Calu3 (cell line): ENCODE measurements at regions of chr12 and their contacts with region 1.

Region 1: GRCh38 chr12:75977952-75978671 is 53.5 kb downstream of the PHLDA1 start:
- DNase-seq: peak; percentile 92
- H3K4me3 Mint-ChIP-seq: peak overlapping the region; percentile 51
- H3K27ac Mint-ChIP-seq: peak overlapping the region; percentile 97
- H3K4me1 Mint-ChIP-seq: peaks cover 65% of the 10 kb centered on the region
- H3K27me3 Mint-ChIP-seq: no peaks in the 10 kb centered on the region
- CTCF ChIP-seq: no peak

Region 2: DNA sequence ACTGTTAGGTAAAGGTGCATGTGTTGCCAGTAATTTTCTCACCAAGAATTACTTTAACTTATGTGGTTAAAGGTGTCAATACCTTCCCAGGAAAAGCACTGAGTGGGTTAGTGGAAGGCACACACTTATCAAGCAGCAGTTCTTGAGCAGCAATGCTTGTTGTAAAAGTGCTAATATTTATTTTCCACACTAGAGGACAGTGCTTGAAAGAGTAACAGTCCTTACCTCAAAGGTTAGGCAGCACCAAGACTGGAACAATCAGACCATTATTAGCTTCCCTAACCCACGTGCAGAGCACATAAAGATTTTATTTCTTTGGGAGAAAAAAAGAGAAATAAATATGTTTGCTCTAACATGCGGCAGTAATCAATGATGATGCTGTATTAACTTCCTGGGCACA is 417.9 kb before region 1 on chr12:
- CTCF ChIA-PET with region 1: no interaction called
- intact Hi-C with region 1: loop called (anchors 5 kb)
- DNase-seq: no peak
- H3K4me3 Mint-ChIP-seq: no peak overlapping the region
- H3K27ac Mint-ChIP-seq: no peak overlapping the region
- H3K4me1 Mint-ChIP-seq: peaks cover 17% of the 10 kb centered on the region
- H3K27me3 Mint-ChIP-seq: no peaks in the 10 kb centered on the region
- CTCF ChIP-seq: no peak

Region 3: DNA sequence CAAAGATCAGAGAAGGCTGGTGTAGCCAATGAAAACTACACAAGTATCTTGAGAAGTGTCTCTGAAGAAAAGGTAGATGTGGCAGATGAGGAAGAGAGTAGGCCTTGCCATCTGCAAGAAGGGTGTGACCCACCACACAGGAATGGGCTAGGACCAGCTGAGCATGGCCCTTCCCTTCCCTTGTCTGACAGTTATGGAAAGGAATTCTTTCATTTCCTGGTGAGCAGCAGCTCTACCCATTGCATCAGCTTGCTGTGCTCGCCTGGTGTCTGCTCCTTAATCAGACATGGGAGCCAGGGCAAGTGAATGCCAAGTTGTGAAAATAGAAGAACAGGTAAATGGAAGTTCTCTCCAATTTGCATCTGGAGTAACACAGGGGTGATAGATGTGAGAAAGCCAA is 321.5 kb before region 1 on chr12:
- CTCF ChIA-PET with region 1: no interaction called
- intact Hi-C with region 1: loop called (anchors 2 kb)
- DNase-seq: peak; percentile 85
- H3K4me3 Mint-ChIP-seq: no peak overlapping the region
- H3K27ac Mint-ChIP-seq: no peak overlapping the region
- H3K4me1 Mint-ChIP-seq: peaks cover 43% of the 10 kb centered on the region
- H3K27me3 Mint-ChIP-seq: no peaks in the 10 kb centered on the region
- CTCF ChIP-seq: no peak

Region 4: GRCh38 chr12:75766263-75767160 is 211.6 kb before region 1 on chr12:
- CTCF ChIA-PET with region 1: no interaction called
- intact Hi-C with region 1: loop called (anchors 2 kb)
- DNase-seq: peak; percentile 63
- H3K4me3 Mint-ChIP-seq: no peak overlapping the region
- H3K27ac Mint-ChIP-seq: peak overlapping the region; percentile 73
- H3K4me1 Mint-ChIP-seq: peaks cover 60% of the 10 kb centered on the region
- H3K27me3 Mint-ChIP-seq: no peaks in the 10 kb centered on the region
- CTCF ChIP-seq: no peak

Region 5: DNA sequence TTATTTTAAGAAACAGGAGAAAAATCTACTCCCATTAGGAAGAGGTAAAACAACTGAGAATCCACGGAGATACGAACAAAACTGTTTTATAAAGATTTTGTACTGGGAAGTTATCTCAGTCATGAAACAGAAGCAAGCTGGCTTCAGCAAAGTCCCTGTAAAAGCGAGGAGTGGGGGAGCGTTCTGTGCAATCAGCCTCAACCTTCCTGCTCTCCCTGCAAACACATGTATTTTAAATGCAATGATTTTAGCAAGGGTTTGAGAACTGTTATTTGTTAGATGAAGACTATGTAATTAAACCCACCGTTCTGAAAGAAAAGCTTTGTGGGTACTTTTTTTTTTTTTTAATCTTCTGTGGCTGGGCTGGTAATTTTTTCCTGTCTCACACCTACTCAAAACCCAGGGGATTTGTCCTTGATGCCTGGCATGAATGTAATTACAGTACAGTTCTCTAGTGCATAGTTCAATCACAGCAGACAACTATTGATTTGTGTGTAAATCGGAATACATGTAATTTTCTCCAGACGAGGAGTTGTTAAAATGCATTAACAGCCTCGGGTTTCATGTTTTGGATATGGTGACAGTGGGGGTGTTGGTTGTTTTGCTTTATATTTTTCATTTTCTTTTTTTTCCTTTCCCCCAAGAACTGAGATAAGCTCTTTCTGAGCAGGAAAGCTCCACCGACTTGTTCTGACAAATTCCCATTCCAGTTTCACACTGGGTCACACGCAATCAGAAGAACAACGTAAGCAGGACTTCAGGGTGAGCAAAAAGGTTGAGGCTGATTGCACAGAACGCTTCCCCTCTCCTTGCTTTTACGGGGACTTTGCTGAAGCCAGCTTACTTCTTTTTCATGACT is 100.1 kb before region 1 on chr12:
- CTCF ChIA-PET with region 1: interaction called, 3 read pairs
- intact Hi-C with region 1: loop called (anchors 5 kb)
- DNase-seq: no peak
- H3K4me3 Mint-ChIP-seq: peak overlapping the region; percentile 52
- H3K27ac Mint-ChIP-seq: peak overlapping the region; percentile 83
- H3K4me1 Mint-ChIP-seq: peaks cover 50% of the 10 kb centered on the region
- H3K27me3 Mint-ChIP-seq: no peaks in the 10 kb centered on the region
- CTCF ChIP-seq: no peak

Region 6: DNA sequence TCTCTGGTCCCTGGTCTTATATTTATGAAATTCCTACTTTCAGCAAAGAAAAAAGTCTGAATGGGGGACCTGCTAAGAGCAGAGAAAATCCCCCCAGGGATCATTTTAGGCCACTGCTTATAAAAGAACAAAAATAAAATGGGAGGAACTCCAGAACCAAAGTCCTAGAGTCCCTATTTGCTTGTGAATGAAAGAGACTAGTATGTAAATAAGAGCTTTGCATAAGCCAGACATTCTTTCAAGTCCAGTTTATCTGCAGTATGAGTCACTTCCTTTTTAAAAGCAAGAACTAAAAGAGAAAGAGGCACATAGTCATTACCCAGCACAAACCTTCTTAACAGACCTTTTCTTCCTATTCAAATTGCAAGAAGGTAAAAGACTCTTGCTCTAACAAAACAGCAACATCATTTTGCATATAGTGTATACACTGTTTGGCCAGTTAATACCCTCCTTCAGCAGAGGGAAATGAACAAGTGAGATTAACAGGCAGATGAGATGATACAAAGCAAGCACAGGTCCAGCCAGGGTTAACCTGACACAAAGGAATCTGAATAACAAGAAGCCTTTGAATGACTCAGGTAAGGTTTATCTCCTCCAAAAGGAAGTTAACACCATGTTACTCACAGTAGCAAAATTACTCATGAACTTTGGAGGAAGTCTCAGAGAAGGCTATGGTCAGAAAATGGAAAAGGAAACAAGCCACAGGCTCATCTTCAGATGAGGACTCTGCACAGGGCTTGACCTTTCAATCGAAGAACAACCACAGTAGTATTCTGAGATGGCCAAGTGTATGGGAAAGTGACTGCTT is 33.8 kb before region 1 on chr12:
- CTCF ChIA-PET with region 1: interaction called, 5 read pairs
- intact Hi-C with region 1: loop called (anchors 2 kb)
- DNase-seq: peak; percentile 44
- H3K4me3 Mint-ChIP-seq: peak overlapping the region; percentile 57
- H3K27ac Mint-ChIP-seq: peak overlapping the region; percentile 87
- H3K4me1 Mint-ChIP-seq: peaks cover 34% of the 10 kb centered on the region
- H3K27me3 Mint-ChIP-seq: no peaks in the 10 kb centered on the region
- CTCF ChIP-seq: no peak

Region 7: GRCh38 chr12:75990189-75990912 is 12.2 kb after region 1 on chr12:
- CTCF ChIA-PET with region 1: no interaction called
- intact Hi-C with region 1: no loop called
- DNase-seq: no peak
- H3K4me3 Mint-ChIP-seq: no peak overlapping the region
- H3K27ac Mint-ChIP-seq: peak overlapping the region; percentile 34
- H3K4me1 Mint-ChIP-seq: peaks cover 60% of the 10 kb centered on the region
- H3K27me3 Mint-ChIP-seq: no peaks in the 10 kb centered on the region
- CTCF ChIP-seq: no peak